ENCODE measurements at regions of chr3 and their contacts with region 1.

Region 1: DNA sequence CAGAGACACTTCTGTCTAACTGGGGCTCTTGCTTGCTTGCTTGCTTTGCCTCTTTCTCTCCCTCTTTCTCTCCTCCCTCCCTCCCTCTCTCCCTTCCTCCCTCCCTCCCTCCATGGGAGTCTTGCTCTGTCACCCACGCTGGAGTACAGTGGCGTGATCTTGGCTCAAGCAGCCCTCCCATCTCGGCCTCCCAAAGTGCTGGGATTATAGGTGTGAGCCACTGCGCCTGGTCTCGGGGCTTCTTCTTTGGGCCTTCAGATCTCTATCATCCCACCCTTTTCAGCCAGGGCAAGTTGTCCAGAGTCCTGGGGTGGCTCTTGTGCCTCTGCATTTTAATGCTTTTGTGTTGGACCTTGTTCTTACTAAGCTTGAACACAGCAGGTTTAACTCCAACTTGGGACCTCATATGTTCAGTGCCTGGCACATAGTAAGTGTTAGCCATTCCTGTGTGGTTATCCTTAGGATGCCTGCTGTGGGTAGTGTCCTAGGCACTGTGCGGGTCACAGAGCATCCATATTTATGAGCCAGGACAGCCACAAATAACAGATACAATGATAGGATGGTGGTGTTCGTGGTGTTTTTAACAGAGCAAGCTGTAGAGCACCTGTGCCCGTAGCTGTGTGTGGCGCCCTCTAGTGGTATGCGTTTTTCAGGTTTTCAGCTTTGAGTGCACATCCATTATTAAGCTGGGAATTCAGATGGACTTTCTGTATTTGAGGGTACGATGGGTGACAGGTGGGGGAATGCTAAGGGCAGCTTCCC is 75.1 kb downstream of the CCK start:
- DNase-seq: peak; percentile 81
- ATAC-seq: peak; percentile 66
- H3K4me3 ChIP-seq: no peak overlapping the region
- H3K4me3 Mint-ChIP-seq: no peak overlapping the region
- H3K27ac ChIP-seq: peak overlapping the region in 1 of 2 donors; percentile 43
- H3K27ac Mint-ChIP-seq: peak overlapping the region; percentile 65
- H3K4me1 ChIP-seq: peaks cover 15 to 29% of the 10 kb centered on the region in 2 donors
- H3K4me1 Mint-ChIP-seq: peaks cover 40% of the 10 kb centered on the region
- H3K27me3 ChIP-seq: no peaks in the 10 kb centered on the region
- H3K27me3 Mint-ChIP-seq: no peaks in the 10 kb centered on the region
- CTCF ChIP-seq: peak; percentile 89

Region 2: DNA sequence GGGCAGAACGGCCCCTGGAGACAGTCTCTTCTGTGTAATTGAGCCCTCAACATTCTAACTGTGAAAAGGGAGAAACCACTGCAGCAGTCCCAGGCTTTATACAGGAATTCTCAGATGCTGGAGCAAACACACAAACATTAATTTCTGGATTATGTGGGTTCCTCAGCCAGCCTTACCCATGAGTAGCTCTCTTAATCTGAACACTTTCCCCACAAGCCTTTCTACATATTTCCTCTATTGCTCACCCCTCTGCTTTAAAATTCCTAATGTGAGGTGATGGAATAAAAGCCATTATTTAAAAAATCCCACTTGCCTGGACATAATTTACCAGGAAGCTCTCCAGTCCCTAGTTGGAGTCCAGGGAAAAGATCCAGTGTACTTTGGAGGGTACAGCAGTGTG is 852.6 kb before region 1 on chr3:
- CTCF ChIA-PET with region 1: no interaction called
- POLR2A ChIA-PET with region 1: no interaction called
- intact Hi-C with region 1: no loop called
- DNase-seq: no peak
- ATAC-seq: no peak
- H3K4me3 ChIP-seq: no peak overlapping the region
- H3K4me3 Mint-ChIP-seq: no peak overlapping the region
- H3K27ac ChIP-seq: no peak overlapping the region
- H3K27ac Mint-ChIP-seq: no peak overlapping the region
- H3K4me1 ChIP-seq: peaks cover 5% of the 10 kb centered on the region in 2 donors
- H3K4me1 Mint-ChIP-seq: peaks cover 14% of the 10 kb centered on the region
- H3K27me3 ChIP-seq: peaks cover 0 to 3% (median 0%) of the 10 kb centered on the region in 4 experiments
- H3K27me3 Mint-ChIP-seq: no peaks in the 10 kb centered on the region
- CTCF ChIP-seq: no peak

Region 3: DNA sequence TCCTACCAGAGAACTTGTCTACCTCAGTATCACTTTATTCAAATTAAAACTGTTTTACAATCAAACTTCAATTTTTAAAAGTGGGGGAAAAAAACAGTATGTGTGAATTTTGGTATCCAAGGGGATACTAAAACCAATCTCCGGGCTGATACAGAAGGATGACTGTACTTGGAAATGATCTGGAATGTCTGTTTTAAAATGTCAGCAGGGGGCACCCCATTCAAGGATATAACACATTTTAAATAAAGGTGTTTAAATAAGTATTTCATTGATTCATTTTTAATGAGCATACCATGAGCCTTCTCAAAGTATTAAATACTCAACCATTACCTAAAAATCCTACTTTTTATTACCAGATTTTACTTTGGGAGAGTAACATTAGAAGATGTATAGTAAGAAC is 296.9 kb before region 1 on chr3:
- CTCF ChIA-PET with region 1: interaction called, 97 read pairs
- POLR2A ChIA-PET with region 1: no interaction called
- intact Hi-C with region 1: loop called (anchors 1 kb)
- DNase-seq: peak; percentile 63
- ATAC-seq: no peak
- H3K4me3 ChIP-seq: no peak overlapping the region
- H3K4me3 Mint-ChIP-seq: no peak overlapping the region
- H3K27ac ChIP-seq: no peak overlapping the region
- H3K27ac Mint-ChIP-seq: no peak overlapping the region
- H3K4me1 ChIP-seq: no peaks in the 10 kb centered on the region
- H3K4me1 Mint-ChIP-seq: no peaks in the 10 kb centered on the region
- H3K27me3 ChIP-seq: no peaks in the 10 kb centered on the region
- H3K27me3 Mint-ChIP-seq: no peaks in the 10 kb centered on the region
- CTCF ChIP-seq: peak; percentile 80

Region 4: DNA sequence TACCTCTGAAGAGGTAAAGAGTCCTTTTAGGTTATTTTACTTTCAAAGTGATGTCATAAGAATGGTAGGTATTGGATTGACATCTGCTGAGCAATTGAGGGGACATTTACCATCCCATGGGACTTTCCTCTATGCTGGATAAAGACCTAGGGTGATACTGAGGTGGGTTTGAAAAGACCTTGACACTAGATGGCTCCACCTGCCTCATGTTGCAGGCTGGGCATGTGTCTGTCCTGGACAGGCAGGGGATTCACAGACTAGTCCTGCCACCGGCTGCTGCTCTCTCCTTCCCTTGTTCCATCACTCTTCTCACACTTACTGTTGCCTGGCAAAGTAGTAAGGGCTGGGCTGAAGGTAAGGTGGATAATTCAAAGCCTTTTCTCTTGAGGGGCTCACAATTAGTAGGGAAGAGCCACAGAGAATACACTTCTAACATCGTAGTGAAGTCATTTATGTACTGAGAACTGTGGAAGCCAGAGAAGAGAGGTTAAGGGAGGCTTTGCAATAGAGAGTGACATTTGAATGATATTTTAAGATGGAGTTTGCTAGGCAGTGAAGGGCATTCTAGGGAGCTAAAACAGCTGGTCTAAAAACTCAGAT is 72.0 kb before region 1 on chr3:
- CTCF ChIA-PET with region 1: interaction called, 58 read pairs
- POLR2A ChIA-PET with region 1: no interaction called
- intact Hi-C with region 1: loop called (anchors 2 kb)
- DNase-seq: peak; percentile 46
- ATAC-seq: no peak
- H3K4me3 ChIP-seq: no peak overlapping the region
- H3K4me3 Mint-ChIP-seq: no peak overlapping the region
- H3K27ac ChIP-seq: peak overlapping the region in 1 of 2 donors; percentile 47
- H3K27ac Mint-ChIP-seq: peak overlapping the region; percentile 59
- H3K4me1 ChIP-seq: peaks cover 51 to 63% of the 10 kb centered on the region in 2 donors
- H3K4me1 Mint-ChIP-seq: peaks cover 86% of the 10 kb centered on the region
- H3K27me3 ChIP-seq: no peaks in the 10 kb centered on the region
- H3K27me3 Mint-ChIP-seq: no peaks in the 10 kb centered on the region
- CTCF ChIP-seq: no peak

Region 5: GRCh38 chr3:42166662-42167300 is 24.1 kb before region 1 on chr3:
- CTCF ChIA-PET with region 1: interaction called, 11 read pairs
- POLR2A ChIA-PET with region 1: no interaction called
- intact Hi-C with region 1: no loop called
- DNase-seq: no peak
- ATAC-seq: no peak
- H3K4me3 ChIP-seq: no peak overlapping the region
- H3K4me3 Mint-ChIP-seq: no peak overlapping the region
- H3K27ac ChIP-seq: no peak overlapping the region
- H3K27ac Mint-ChIP-seq: no peak overlapping the region
- H3K4me1 ChIP-seq: peaks cover 41 to 45% of the 10 kb centered on the region in 2 donors
- H3K4me1 Mint-ChIP-seq: peaks cover 83% of the 10 kb centered on the region
- H3K27me3 ChIP-seq: no peaks in the 10 kb centered on the region
- H3K27me3 Mint-ChIP-seq: no peaks in the 10 kb centered on the region
- CTCF ChIP-seq: no peak

Region 6: DNA sequence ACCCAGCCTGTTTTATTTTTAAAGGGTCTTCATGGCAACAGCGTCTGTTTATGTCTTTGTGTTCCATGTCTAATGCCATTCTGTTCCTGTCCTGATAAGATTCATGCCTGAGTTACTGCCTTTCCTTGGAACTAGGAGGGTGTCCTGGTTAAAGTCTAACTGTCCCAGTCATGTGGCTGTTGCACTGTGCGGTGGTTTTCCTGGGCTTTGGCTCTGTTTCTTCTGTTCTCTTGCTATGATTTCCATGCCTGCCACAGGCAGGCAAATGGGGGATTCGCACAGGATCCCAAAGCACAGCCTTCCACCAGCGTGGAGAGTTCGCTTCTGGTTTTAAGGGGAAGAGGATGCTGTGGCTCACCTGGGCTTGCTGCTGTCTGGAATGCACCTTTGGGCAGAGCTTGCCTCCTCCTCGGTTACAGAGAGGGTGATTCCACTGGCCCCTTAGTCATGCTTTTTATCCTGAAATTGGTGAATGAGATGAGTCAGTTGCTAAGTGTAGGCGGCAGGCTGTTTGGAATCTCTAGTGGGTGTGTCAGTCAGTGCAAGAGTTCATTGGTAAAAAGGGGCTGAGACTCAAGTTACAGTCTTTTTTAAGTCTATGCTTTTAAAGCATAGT is 11.7 kb before region 1 on chr3:
- CTCF ChIA-PET with region 1: interaction called, 14 read pairs
- POLR2A ChIA-PET with region 1: no interaction called
- intact Hi-C with region 1: no loop called
- DNase-seq: no peak
- ATAC-seq: no peak
- H3K4me3 ChIP-seq: no peak overlapping the region
- H3K4me3 Mint-ChIP-seq: no peak overlapping the region
- H3K27ac ChIP-seq: no peak overlapping the region
- H3K27ac Mint-ChIP-seq: peak overlapping the region; percentile 42
- H3K4me1 ChIP-seq: peaks cover 16 to 21% of the 10 kb centered on the region in 2 donors
- H3K4me1 Mint-ChIP-seq: peaks cover 20% of the 10 kb centered on the region
- H3K27me3 ChIP-seq: no peaks in the 10 kb centered on the region
- H3K27me3 Mint-ChIP-seq: no peaks in the 10 kb centered on the region
- CTCF ChIP-seq: no peak

Region 7: GRCh38 chr3:42205800-42206514 is 15.1 kb after region 1 on chr3:
- CTCF ChIA-PET with region 1: interaction called, 22 read pairs
- POLR2A ChIA-PET with region 1: no interaction called
- intact Hi-C with region 1: no loop called
- DNase-seq: no peak
- ATAC-seq: no peak
- H3K4me3 ChIP-seq: no peak overlapping the region
- H3K4me3 Mint-ChIP-seq: no peak overlapping the region
- H3K27ac ChIP-seq: no peak overlapping the region
- H3K27ac Mint-ChIP-seq: no peak overlapping the region
- H3K4me1 ChIP-seq: no peaks in the 10 kb centered on the region
- H3K4me1 Mint-ChIP-seq: no peaks in the 10 kb centered on the region
- H3K27me3 ChIP-seq: no peaks in the 10 kb centered on the region
- H3K27me3 Mint-ChIP-seq: no peaks in the 10 kb centered on the region
- CTCF ChIP-seq: no peak

Region 8: GRCh38 chr3:42214565-42215283 is 23.8 kb after region 1 on chr3:
- CTCF ChIA-PET with region 1: interaction called, 13 read pairs
- POLR2A ChIA-PET with region 1: no interaction called
- intact Hi-C with region 1: no loop called
- DNase-seq: no peak
- ATAC-seq: no peak
- H3K4me3 ChIP-seq: no peak overlapping the region
- H3K4me3 Mint-ChIP-seq: peak overlapping the region; percentile 37
- H3K27ac ChIP-seq: peak overlapping the region in 1 of 2 donors; percentile 45
- H3K27ac Mint-ChIP-seq: peak overlapping the region; percentile 62
- H3K4me1 ChIP-seq: peaks cover 47 to 49% of the 10 kb centered on the region in 2 donors
- H3K4me1 Mint-ChIP-seq: peaks cover 61% of the 10 kb centered on the region
- H3K27me3 ChIP-seq: no peaks in the 10 kb centered on the region
- H3K27me3 Mint-ChIP-seq: no peaks in the 10 kb centered on the region
- CTCF ChIP-seq: no peak

Region 9: DNA sequence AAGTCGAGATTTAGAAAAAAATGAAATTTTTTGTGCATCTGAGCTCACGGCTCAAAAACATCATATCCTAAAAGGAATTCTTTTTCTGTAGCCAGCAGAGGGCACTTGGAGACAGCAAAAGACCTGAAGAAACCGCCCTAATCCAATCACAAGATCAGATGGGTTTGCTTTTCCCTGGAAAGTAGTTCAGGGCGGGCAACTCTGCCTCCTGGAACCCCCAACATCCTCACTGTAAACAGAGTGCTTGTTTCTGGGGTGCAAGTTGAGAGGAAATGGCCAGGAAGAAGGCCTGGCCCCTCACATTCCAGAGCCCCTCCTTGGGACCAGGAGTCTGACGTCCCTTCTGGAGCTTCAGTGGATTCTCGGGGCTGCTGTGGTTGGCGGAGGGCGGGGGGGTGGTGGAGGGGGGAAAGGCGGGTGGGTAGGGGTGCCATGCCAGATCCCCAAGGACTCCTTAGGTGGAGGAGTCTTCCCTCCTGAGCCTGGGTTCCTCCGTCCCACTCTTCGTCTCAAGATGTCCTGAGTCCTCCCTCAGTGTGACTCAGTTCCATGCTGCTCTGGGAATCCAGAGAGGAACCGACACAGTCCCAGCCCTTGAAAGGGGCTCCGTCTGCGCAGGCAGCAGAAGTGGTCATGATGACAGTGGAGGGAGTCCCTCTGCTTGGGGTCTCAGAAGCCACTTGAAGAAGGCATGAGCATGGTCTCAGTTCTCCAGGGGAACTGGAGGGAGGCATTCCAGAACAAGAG is 39.2 kb after region 1 on chr3:
- CTCF ChIA-PET with region 1: no interaction called
- POLR2A ChIA-PET with region 1: no interaction called
- intact Hi-C with region 1: no loop called
- DNase-seq: no peak
- ATAC-seq: no peak
- H3K4me3 ChIP-seq: no peak overlapping the region
- H3K4me3 Mint-ChIP-seq: no peak overlapping the region
- H3K27ac ChIP-seq: no peak overlapping the region
- H3K27ac Mint-ChIP-seq: no peak overlapping the region
- H3K4me1 ChIP-seq: no peaks in the 10 kb centered on the region
- H3K4me1 Mint-ChIP-seq: no peaks in the 10 kb centered on the region
- H3K27me3 ChIP-seq: peaks cover 0 to 7% (median under 1%) of the 10 kb centered on the region in 4 experiments
- H3K27me3 Mint-ChIP-seq: peaks cover 11% of the 10 kb centered on the region
- CTCF ChIP-seq: no peak

Region 10: DNA sequence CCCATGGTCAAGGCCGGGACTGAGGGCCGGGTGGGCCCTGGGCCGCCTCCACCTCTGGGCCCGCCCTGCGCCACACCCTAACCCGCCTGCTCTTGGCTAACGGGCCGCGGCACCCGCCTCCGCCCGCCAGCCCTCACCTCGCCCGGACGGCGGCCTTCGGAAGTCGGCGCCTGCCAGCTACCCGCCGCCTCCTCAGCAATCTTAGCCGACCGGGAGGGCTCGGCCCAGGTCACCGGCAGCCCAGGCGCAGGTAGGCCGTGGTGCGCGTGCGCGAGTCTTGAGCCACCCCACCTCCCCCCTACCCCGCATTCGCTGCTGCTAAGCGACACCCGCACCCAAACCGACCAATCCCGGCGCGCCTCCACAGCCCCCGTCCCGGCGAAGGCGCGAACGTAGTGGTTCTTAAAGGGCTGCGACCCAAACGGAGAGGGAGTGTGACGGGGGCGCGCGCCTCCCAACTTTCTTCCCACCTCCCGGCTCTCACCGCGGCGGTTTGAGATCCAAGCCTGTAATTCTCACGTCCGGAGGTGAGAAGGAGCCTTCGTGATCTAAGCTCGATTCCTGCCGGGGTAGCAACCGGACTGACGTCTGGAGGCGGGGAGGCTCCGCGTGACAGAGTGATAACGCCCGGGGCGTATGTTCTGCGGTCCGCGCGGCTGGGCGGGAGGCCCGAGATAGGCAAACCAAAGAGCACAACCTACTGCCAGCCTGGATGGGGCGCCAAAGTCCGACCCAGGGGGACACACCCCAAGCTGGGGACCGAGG is 391.0 kb after region 1 on chr3 and contains the start of gene SEC22C:
- CTCF ChIA-PET with region 1: no interaction called
- POLR2A ChIA-PET with region 1: no interaction called
- intact Hi-C with region 1: no loop called
- DNase-seq: peak; percentile 97
- ATAC-seq: peak; percentile 89
- H3K4me3 ChIP-seq: peak within 1 kb of the TSS; percentile 52 to 87 (median 80)
- H3K4me3 Mint-ChIP-seq: peak within 1 kb of the TSS; percentile 96
- H3K27ac ChIP-seq: peak within 1 kb of the TSS; percentile 92 to 98
- H3K27ac Mint-ChIP-seq: peak within 1 kb of the TSS; percentile 98
- H3K4me1 ChIP-seq: peaks cover 14% of the 10 kb centered on the region in 2 donors
- H3K4me1 Mint-ChIP-seq: peaks cover 37% of the 10 kb centered on the region
- H3K27me3 ChIP-seq: no peaks in the 10 kb centered on the region
- H3K27me3 Mint-ChIP-seq: no peaks in the 10 kb centered on the region
- CTCF ChIP-seq: peak; percentile 73
- total RNA-seq, gene SEC22C: 44.8 and 51.4 TPM in 2 replicates

Measured in B cell (primary cell).